GM12878 (cell line): ENCODE measurements at regions of chr19 and their contacts with region 1.

Region 1: DNA sequence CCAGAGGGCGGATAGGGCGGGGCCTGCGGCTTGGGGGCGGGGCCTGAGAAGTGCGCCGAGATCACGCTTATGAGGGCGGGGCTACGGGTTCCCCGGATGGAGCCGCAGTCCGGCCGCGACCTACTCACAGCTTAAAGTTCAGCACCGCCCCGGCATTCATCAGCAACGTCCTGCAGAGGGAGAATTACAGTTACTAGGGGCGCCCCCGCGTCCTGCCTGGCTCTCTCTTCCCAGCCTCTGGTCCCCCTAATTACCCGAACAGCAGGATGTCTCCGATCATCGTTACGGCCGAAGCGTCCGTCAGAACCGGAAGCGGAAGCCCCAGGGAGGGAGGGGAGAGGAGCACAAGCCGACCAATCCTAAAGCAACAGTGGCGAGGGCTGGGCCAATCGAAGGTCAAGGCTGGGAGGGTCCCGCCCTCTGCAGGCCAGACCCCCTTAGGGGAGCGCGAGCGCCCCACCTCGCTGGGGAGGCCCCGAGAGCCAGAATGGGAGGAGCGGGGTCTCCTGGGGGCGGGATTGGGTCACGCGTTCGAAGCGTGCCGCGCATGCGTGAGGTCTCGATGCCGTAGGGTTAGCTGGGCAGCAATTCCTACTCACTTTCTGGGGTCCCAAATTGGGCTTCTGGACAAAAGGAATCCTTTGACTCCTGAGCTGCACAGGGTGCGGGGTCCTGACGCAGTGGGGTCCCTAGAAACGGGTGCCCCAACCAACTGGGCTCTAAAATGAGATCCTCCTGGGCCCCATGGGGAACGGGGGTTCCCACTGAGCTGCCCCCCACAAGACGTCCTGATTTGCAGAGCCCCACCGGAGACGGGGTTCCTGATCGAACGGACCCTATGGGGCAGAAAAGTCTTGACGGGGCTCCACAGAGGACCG is at the start of gene SMIM7:
- DNase-seq: peak; percentile 98
- ATAC-seq: peak; percentile 97
- H3K4me3 ChIP-seq: peak within 1 kb of the TSS; percentile 99
- H3K27ac ChIP-seq: peak within 1 kb of the TSS; percentile 94
- H3K4me1 ChIP-seq: peaks cover 18% of the 10 kb centered on the region
- H3K27me3 ChIP-seq: no peaks in the 10 kb centered on the region
- CTCF ChIP-seq: peak in 1 of 3 experiments; percentile 47; a peak in 2 of 6 replicates
- EP300 ChIP-seq: no peak
- POLR2A ChIP-seq: peak; percentile 91
- RAD21 ChIP-seq: no peak
- polyA plus RNA-seq, gene SMIM7: 157 to 170 TPM

Region 2: GRCh38 chr19:16572332-16573211 is 87.5 kb before region 1 on chr19 and contains the start of gene SLC35E1:
- CTCF ChIA-PET with region 1: no interaction called
- POLR2A ChIA-PET with region 1: interaction called, 10 read pairs
- RAD21 ChIA-PET with region 1: interaction called, 9 read pairs
- SMC1A ChIA-PET with region 1: interaction called, 3 read pairs
- in situ Hi-C with region 1: no loop called
- intact Hi-C with region 1: no loop called
- DNase-seq: peak; percentile 86
- ATAC-seq: peak; percentile 97
- H3K4me3 ChIP-seq: peak within 1 kb of the TSS; percentile 97
- H3K27ac ChIP-seq: peak within 1 kb of the TSS; percentile 87
- H3K4me1 ChIP-seq: peaks cover 12% of the 10 kb centered on the region
- H3K27me3 ChIP-seq: no peaks in the 10 kb centered on the region
- CTCF ChIP-seq: no peak
- EP300 ChIP-seq: no peak
- POLR2A ChIP-seq: peak; percentile 94
- RAD21 ChIP-seq: no peak
- polyA plus RNA-seq, gene SLC35E1: 11.3 to 15.1 TPM